ENCODE measurements at regions of chr5 and their contacts with region 1.

Region 1: DNA sequence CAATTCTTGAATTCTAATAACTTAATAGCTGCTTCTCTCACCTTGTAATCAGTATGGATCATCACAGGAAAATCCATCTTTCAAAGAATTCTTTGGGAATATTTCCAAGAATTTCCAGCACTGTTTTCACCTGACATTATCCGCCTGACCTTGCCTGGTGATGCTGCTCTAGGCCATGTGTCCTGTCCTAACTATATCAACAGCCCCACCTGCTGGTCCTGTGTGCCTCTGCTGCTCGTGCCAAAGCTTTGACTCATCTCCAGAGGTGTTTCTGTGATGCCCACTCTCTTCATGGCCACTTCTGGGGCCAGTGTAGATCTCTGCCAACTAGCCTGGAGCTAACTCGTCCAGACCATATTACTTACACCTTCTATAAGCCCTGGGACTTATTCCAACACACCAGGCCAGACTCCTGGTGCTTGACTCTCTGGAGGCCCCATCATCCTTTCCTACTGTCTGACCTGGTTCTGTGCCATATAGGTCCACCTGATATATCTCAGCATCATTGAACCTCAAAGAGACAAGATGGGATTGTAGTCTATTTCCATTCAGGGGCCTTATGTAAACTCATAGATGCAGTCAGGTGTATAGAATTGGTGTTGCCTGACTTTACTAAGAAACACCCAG is 67.5 kb upstream of the CKMT2 start:
- DNase-seq: peak; percentile 40
- H3K4me3 ChIP-seq: no peak overlapping the region
- H3K27ac ChIP-seq: no peak overlapping the region
- H3K4me1 ChIP-seq: no peaks in the 10 kb centered on the region
- H3K27me3 ChIP-seq: no peaks in the 10 kb centered on the region
- CTCF ChIP-seq: peak; percentile 31 to 70 (median 46)
- POLR2A ChIP-seq: no peak

Region 2: DNA sequence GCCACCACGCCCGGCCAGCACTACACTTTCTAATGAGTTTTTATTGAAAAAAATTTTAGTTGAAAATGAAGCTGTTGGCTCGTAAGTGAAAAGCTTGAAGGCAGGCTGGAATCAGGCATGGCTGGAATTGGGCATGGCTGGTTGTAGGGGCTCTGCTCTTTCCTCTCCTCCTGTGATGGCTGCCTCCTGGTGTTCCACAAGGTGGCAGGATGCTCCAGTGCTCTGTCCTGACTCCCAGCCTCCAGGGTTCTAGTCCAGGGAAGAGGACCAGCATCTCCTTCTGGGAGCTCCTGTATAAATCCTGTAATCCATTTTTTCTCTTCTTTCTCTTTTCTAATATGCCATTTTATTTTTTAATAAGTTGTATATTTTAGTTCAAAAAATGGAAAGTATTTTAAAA is 453.7 kb before region 1 on chr5:
- intact Hi-C with region 1: loop called (anchors 5 kb)
- DNase-seq: no peak
- H3K4me3 ChIP-seq: no peak overlapping the region
- H3K27ac ChIP-seq: no peak overlapping the region
- H3K4me1 ChIP-seq: peaks cover 2% of the 10 kb centered on the region
- H3K27me3 ChIP-seq: no peaks in the 10 kb centered on the region
- CTCF ChIP-seq: peak in 2 of 4 experiments; percentile 22 to 27
- POLR2A ChIP-seq: no peak

Region 3: DNA sequence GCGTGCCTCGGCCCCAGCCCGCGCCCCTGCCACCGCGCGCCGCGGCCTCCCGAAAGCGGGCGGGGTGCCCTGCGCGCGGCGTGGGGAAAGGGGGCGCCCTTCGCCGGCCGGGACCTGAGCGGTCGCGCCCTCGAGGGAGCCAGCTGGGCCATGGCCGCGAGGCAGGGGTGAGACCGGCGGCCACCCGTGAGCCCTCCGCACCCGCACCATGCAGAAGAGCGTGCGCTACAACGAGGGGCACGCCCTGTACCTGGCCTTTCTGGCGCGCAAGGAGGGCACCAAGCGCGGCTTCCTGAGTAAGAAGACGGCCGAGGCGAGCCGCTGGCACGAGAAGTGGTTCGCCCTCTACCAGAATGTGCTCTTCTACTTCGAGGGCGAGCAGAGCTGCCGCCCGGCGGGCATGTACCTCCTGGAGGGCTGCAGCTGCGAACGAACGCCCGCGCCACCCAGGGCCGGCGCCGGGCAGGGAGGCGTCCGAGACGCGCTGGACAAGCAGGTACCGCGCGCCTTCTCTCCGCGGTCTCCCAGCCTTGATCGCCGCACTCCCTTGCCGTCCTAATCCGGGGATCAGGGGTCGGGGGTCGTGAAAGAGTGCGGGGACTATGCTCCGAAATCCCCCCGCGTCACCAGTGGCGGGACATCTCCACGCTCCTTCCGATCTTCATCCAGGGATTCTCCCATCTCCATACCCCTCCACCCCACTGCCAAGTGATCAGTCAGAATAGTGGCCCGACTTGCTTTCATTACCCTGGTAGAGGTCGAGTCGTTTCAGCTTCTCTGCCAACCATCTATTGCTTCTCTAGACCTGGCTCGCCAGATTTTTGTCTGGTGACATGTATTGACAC is 204.9 kb before region 1 on chr5:
- intact Hi-C with region 1: loop called (anchors 10 kb)
- DNase-seq: no peak
- H3K4me3 ChIP-seq: peak overlapping the region; percentile 46 to 47
- H3K27ac ChIP-seq: peak overlapping the region; percentile 76
- H3K4me1 ChIP-seq: no peaks in the 10 kb centered on the region
- H3K27me3 ChIP-seq: no peaks in the 10 kb centered on the region
- CTCF ChIP-seq: peak in 1 of 4 experiments; percentile 17
- POLR2A ChIP-seq: no peak

Region 4: GRCh38 chr5:81556809-81557208 is 391.2 kb after region 1 on chr5:
- intact Hi-C with region 1: no loop called
- DNase-seq: no peak
- H3K4me3 ChIP-seq: no peak overlapping the region
- H3K27ac ChIP-seq: no peak overlapping the region
- H3K4me1 ChIP-seq: no peaks in the 10 kb centered on the region
- H3K27me3 ChIP-seq: no peaks in the 10 kb centered on the region
- CTCF ChIP-seq: no peak
- POLR2A ChIP-seq: no peak

Measured in prostate gland (tissue), 2 donors.